Posterior cingulate gyrus (tissue), 11 donors: ENCODE measurements at regions of chr18 and their contacts with region 1.

Region 1: GRCh38 chr18:11831921-11832320 is 19.3 kb upstream of the CHMP1B start:
- DNase-seq: no peak

Region 2: DNA sequence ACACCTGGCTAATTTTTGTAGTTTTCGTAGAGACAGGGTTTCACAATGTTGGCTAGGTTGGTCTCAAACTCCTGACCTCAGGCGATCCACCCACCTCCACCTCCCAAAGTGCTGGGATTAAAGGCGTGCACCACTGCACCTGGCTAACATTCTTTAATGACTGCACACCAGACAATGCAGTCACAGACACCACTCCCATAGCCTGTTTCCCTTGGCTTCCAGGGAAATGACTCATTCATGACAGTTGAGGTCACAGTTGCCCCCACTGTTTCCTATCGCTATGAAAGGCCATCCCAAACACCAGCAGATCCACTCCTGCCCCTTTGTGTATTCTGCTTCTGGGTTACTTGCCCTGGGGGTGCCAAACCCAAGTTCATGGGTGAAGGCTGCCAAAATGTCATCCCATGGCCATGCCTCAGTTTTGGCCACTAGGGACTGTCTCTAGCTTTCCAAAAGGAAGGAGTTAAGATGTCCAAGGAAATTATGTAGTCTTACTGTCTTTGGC is 28.0 kb after region 1 on chr18:
- intact Hi-C with region 1: loop called (anchors 2 kb)
- DNase-seq: no peak